ENCODE measurements at regions of chr1 and their contacts with region 1.

Region 1: DNA sequence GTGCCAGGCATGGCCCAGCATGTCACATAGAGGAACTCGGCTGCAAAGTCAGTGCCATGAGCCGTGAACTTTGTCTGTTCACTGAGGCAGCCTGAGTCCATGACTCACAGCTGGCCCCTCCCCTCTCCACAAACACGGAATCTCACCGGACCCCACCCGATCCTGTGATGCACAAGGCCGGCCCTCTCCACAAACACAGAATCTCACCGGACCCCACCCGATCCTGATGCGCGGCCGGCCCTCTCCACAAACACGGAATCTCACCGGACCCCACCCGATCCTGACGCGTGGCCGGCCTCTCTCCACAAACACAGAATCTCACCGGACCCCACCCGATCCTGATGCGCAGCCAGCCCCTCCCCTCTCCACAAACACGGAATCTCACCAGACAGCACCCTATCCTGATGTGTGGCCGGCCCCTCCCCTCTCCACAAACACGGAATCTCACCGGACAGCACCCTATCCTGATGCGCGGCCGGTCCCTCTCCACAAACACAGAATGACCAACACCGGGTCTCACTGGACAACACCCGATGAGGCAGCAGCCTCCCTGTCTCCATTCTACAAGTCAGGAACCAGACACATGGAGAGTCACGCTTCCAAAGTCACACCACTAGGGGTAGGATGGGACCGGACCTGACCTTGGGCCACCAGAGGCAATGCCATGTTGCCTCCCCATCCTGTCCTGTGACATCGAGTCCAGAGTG is 39.6 kb upstream of the GPR153 start:
- DNase-seq: peak; percentile 92
- ATAC-seq: peak; percentile 66
- H3K4me3 ChIP-seq: peak overlapping the region; percentile 30
- H3K27ac ChIP-seq: peak overlapping the region; percentile 94
- H3K4me1 ChIP-seq: peaks cover 53% of the 10 kb centered on the region
- H3K27me3 ChIP-seq: no peaks in the 10 kb centered on the region
- CTCF ChIP-seq: peak; percentile 47

Region 2: GRCh38 chr1:6259491-6260425 is 40.7 kb before region 1 on chr1:
- CTCF ChIA-PET with region 1: no interaction called
- POLR2A ChIA-PET with region 1: interaction called, 12 read pairs
- intact Hi-C with region 1: loop called (anchors 1 kb)
- DNase-seq: peak; percentile 92
- ATAC-seq: peak; percentile 38
- H3K4me3 ChIP-seq: peak overlapping the region; percentile 80
- H3K27ac ChIP-seq: peak overlapping the region; percentile 75
- H3K4me1 ChIP-seq: peaks cover 21% of the 10 kb centered on the region
- H3K27me3 ChIP-seq: no peaks in the 10 kb centered on the region
- CTCF ChIP-seq: no peak

Region 3: DNA sequence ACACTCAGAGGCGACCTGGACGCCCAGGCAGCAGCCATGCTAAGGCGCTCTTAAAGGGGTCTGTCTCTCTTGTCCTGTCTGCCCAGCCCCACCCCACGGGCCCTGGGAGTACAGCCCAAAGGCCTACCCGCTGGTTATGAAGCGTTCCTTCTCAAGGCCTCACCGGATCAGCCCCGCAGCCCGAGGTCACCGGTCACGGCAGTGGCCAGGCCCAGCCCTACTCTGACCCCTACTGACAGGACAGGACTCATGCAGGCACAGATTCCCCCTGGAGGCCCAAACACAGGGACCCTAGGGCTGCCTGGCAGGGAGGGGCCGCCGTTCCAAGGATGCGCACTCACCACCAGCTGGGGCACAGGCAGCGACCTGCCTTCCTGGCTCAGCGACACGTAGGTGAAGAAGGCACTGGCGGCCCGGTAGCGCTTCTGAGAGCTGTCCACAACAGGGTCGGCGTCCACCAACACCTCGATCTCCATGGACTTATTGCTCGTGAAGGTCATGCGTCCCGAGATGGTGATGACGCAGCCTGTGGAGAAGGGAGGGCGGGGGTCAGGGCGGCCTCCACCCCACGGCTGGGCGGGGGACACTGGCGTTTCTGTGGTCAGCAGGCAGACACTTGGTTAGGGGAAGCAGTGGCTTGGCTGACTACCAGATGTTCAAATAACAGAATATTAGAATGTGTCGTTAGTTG is 19.6 kb before region 1 on chr1:
- CTCF ChIA-PET with region 1: no interaction called
- POLR2A ChIA-PET with region 1: interaction called, 23 read pairs
- intact Hi-C with region 1: no loop called
- DNase-seq: no peak
- ATAC-seq: peak; percentile 72
- H3K4me3 ChIP-seq: no peak overlapping the region
- H3K27ac ChIP-seq: peak overlapping the region; percentile 18; the same call in 1 of the 2 replicates
- H3K4me1 ChIP-seq: peaks cover 11% of the 10 kb centered on the region
- H3K27me3 ChIP-seq: no peaks in the 10 kb centered on the region
- CTCF ChIP-seq: peak; percentile 64

Region 4: DNA sequence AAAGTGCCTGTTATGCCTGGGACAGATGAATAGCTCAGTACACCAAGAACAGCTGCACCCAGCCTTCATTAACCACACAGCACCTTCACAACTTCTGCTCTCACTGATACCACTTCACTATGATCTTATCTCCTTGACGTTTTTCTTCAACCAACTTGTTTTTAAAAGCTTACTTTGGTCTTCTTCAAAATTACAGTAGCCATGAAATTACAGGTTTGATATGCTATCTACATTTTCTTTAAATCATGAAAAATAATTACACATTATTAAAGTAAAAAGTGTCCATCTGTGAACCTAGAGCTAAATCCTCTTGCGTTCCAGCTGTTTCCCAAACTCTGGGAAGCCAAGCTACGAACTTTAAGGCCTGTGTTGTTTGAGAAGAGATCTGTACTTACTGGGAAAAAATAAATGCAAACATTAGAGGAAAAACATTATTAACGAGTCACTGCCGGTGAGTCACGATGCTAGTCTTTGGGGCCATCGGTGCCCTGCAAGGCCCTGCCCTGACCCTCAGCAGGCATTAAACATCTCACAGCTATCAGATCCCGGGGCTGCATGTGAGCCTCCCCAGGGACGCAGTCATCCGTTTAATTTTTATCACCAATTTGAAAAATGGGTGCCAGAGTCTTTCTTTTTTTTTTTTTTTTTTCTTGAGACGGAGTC is 16.7 kb after region 1 on chr1:
- CTCF ChIA-PET with region 1: no interaction called
- POLR2A ChIA-PET with region 1: interaction called, 23 read pairs
- intact Hi-C with region 1: loop called (anchors 1 kb)
- DNase-seq: peak; percentile 91
- ATAC-seq: peak; percentile 94
- H3K4me3 ChIP-seq: no peak overlapping the region
- H3K27ac ChIP-seq: peak overlapping the region; percentile 95
- H3K4me1 ChIP-seq: peaks cover 29% of the 10 kb centered on the region
- H3K27me3 ChIP-seq: no peaks in the 10 kb centered on the region
- CTCF ChIP-seq: no peak

Measured in PC-3 (cell line).